Activated CD8-positive, alpha-beta memory T cell treated with anti-CD3 and anti-CD28 coated beads, Interleukin-2, amount 10 ng/mL, durations not matched to agents 7 days and 5 days (primary cell): ENCODE measurements at regions of chr7 and their contacts with region 1.

Region 1: GRCh38 chr7:36723951-36724664 is at the start of gene AOAH:
- DNase-seq: peak; percentile 96
- ATAC-seq: peak; percentile 94
- H3K4me3 Mint-ChIP-seq: peak within 1 kb of the TSS; percentile 81
- H3K27ac Mint-ChIP-seq: peak within 1 kb of the TSS; percentile 89
- H3K4me1 Mint-ChIP-seq: peaks cover 84% of the 10 kb centered on the region
- H3K27me3 Mint-ChIP-seq: no peaks in the 10 kb centered on the region
- total RNA-seq, gene AOAH: 44.5 to 48.8 TPM

Region 2: GRCh38 chr7:36639826-36640225 is 84.3 kb before region 1 on chr7:
- CTCF ChIA-PET with region 1: no interaction called
- DNase-seq: peak; percentile 91
- ATAC-seq: peak; percentile 98
- H3K4me3 Mint-ChIP-seq: peak overlapping the region; percentile 14
- H3K27ac Mint-ChIP-seq: peak overlapping the region; percentile 94
- H3K4me1 Mint-ChIP-seq: peaks cover 52% of the 10 kb centered on the region
- H3K27me3 Mint-ChIP-seq: no peaks in the 10 kb centered on the region

Region 3: GRCh38 chr7:36659172-36659516 is 65.0 kb before region 1 on chr7:
- CTCF ChIA-PET with region 1: no interaction called
- DNase-seq: no peak
- ATAC-seq: no peak
- H3K4me3 Mint-ChIP-seq: no peak overlapping the region
- H3K27ac Mint-ChIP-seq: no peak overlapping the region
- H3K4me1 Mint-ChIP-seq: peaks cover 17% of the 10 kb centered on the region
- H3K27me3 Mint-ChIP-seq: no peaks in the 10 kb centered on the region

Region 4: DNA sequence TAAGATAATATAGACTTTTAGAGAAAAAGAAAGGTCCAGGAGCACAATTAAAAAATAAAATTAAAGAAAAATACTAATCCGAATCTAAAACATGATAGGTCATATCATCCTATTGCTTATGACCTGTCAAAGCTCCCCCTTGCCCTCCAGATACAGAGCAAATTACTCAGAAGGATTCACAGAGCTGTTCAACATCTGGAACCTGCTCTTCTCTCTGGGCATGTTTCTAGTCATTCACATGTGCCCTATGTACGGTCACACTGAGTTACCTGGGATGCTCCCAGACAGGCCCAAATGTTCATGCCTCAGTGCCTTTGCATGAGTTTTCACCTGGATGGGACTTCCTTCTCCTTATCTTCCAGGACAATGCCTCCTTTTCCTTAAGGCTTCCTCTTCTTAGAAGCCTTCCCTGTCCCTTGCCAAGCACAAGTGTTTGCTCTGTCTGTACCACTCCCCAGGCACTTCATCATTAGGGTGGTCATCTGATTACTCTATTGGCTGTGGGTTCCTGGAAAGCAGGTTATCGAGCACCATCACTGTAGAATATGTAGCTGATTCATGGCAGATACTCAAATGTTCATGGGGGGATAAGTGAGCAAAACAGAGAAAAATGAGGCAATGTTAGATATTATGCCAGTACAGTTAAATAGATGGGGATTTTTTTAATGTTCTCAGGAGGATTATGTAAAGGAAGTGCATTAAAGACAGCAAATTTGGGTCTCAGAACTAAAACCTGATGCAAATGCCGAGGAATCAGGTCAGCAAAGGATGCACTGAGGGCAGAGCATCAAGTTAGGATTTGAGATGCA is 12.2 kb after region 1 on chr7:
- CTCF ChIA-PET with region 1: interaction called, 14 read pairs
- DNase-seq: no peak
- ATAC-seq: peak; percentile 52
- H3K4me3 Mint-ChIP-seq: peak overlapping the region; percentile 32
- H3K27ac Mint-ChIP-seq: peak overlapping the region; percentile 88
- H3K4me1 Mint-ChIP-seq: peaks cover 48% of the 10 kb centered on the region
- H3K27me3 Mint-ChIP-seq: no peaks in the 10 kb centered on the region

Region 5: GRCh38 chr7:36784991-36785940 is 61.2 kb after region 1 on chr7:
- CTCF ChIA-PET with region 1: interaction called, 11 read pairs
- DNase-seq: peak; percentile 91
- ATAC-seq: peak; percentile 84
- H3K4me3 Mint-ChIP-seq: peak overlapping the region; percentile 25
- H3K27ac Mint-ChIP-seq: peak overlapping the region; percentile 88
- H3K4me1 Mint-ChIP-seq: peaks cover 88% of the 10 kb centered on the region
- H3K27me3 Mint-ChIP-seq: no peaks in the 10 kb centered on the region

Region 6: DNA sequence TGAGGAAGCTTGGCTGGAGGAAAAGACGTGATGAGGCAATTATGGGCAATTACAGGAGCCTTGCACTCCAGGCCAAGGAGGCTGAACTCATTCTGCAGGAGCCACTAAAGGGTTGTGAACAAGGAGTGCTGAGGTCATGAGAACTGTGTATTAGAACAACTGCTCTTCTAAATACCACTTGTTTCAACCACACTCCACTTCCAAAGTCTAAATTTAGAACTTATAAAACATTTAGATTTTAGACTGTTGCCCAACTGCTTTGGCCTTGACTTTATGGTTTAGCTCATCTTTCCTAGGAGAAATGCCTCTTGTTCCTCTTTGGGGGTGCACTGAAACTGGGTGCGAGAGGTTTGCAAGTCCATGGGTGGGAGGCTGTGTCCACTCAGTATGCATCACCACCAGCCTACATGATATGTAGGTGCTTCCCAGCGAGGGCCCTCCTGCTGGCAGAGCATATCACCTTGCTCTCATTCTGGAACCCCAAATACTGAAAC is 199.9 kb after region 1 on chr7:
- CTCF ChIA-PET with region 1: no interaction called
- DNase-seq: no peak
- ATAC-seq: no peak
- H3K4me3 Mint-ChIP-seq: no peak overlapping the region
- H3K27ac Mint-ChIP-seq: no peak overlapping the region
- H3K4me1 Mint-ChIP-seq: no peaks in the 10 kb centered on the region
- H3K27me3 Mint-ChIP-seq: no peaks in the 10 kb centered on the region